Naive thymus-derived CD4-positive, alpha-beta T cell (primary cell): ENCODE measurements at regions of chr17 and their contacts with region 1.

Region 1: GRCh38 chr17:82518826-82519810 is at the start of gene FOXK2:
- DNase-seq: peak; percentile 90 to 99 (median 95)
- ATAC-seq: peak; percentile 99
- H3K4me3 ChIP-seq: peak within 1 kb of the TSS; percentile 67
- H3K4me3 Mint-ChIP-seq: peak within 1 kb of the TSS; percentile 82 to 99 (median 93)
- H3K27ac ChIP-seq: peak within 1 kb of the TSS; percentile 92
- H3K27ac Mint-ChIP-seq: peak within 1 kb of the TSS; percentile 71 to 93 (median 87)
- H3K4me1 ChIP-seq: peaks cover 4 to 16% of the 10 kb centered on the region in 2 donors
- H3K4me1 Mint-ChIP-seq: peaks cover 15 to 36% (median 30%) of the 10 kb centered on the region in 7 donors
- H3K27me3 ChIP-seq: no peaks in the 10 kb centered on the region
- H3K27me3 Mint-ChIP-seq: no peaks in the 10 kb centered on the region
- total RNA-seq, gene FOXK2: 36.5 to 67.1 (median 48.4) TPM

Region 2: DNA sequence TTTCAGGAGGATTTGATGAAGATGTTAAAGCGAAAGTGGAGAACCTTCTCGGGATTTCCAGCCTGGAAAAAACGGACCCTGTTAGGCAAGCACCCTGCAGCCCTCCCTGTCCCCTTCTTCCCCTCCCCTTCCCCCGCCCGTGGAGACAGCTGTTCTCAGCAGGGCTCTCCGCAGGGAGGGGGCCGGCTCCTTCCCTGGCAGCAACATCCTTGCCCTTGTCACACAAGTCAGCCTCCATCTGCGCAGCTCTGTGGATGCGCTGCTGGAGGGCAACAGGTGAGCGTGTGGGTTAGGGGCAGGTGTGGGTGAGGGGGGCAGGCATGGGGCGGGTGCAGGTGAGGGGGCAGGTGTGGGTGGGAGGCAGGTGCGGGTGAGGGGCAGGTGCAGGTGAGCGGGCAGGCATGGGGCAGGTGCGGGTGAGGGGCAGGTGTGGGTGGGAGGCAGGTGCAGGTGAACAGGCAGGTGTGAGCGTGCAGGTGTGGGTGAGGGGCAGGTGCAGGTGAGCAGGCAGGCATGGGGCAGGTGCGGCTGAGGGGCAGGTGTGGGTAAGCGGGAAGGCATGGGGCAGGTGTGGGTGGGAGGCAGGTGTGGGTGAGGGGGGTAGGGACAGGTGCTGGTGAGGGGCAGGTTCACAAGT is 78.0 kb before region 1 on chr17:
- CTCF ChIA-PET with region 1: no interaction called
- POLR2A ChIA-PET with region 1: no interaction called
- intact Hi-C with region 1: no loop called
- DNase-seq: no peak
- ATAC-seq: no peak
- H3K4me3 ChIP-seq: no peak overlapping the region
- H3K4me3 Mint-ChIP-seq: no peak overlapping the region
- H3K27ac ChIP-seq: no peak overlapping the region
- H3K27ac Mint-ChIP-seq: peak overlapping the region in 1 of 9 donors; percentile 28
- H3K4me1 ChIP-seq: no peaks in the 10 kb centered on the region
- H3K4me1 Mint-ChIP-seq: peaks cover 0 to 10% (median 2%) of the 10 kb centered on the region in 7 donors
- H3K27me3 ChIP-seq: no peaks in the 10 kb centered on the region
- H3K27me3 Mint-ChIP-seq: no peaks in the 10 kb centered on the region

Region 3: GRCh38 chr17:82494236-82495055 is 24.7 kb before region 1 on chr17:
- CTCF ChIA-PET with region 1: no interaction called
- POLR2A ChIA-PET with region 1: interaction called, 11 read pairs
- intact Hi-C with region 1: loop called (anchors 1 to 2 kb)
- DNase-seq: peak; percentile 68 to 92 (median 80)
- ATAC-seq: peak; percentile 80
- H3K4me3 ChIP-seq: no peak overlapping the region
- H3K4me3 Mint-ChIP-seq: peak overlapping the region in 9 of 10 donors; percentile 14 to 84 (median 65)
- H3K27ac ChIP-seq: peak overlapping the region; percentile 28
- H3K27ac Mint-ChIP-seq: peak overlapping the region; percentile 77 to 94 (median 87)
- H3K4me1 ChIP-seq: peaks cover 0 to 9% of the 10 kb centered on the region in 2 donors
- H3K4me1 Mint-ChIP-seq: peaks cover 8 to 33% (median 25%) of the 10 kb centered on the region in 7 donors
- H3K27me3 ChIP-seq: no peaks in the 10 kb centered on the region
- H3K27me3 Mint-ChIP-seq: peaks cover 0 to 2% (median 0%) of the 10 kb centered on the region in 5 donors

Region 4: DNA sequence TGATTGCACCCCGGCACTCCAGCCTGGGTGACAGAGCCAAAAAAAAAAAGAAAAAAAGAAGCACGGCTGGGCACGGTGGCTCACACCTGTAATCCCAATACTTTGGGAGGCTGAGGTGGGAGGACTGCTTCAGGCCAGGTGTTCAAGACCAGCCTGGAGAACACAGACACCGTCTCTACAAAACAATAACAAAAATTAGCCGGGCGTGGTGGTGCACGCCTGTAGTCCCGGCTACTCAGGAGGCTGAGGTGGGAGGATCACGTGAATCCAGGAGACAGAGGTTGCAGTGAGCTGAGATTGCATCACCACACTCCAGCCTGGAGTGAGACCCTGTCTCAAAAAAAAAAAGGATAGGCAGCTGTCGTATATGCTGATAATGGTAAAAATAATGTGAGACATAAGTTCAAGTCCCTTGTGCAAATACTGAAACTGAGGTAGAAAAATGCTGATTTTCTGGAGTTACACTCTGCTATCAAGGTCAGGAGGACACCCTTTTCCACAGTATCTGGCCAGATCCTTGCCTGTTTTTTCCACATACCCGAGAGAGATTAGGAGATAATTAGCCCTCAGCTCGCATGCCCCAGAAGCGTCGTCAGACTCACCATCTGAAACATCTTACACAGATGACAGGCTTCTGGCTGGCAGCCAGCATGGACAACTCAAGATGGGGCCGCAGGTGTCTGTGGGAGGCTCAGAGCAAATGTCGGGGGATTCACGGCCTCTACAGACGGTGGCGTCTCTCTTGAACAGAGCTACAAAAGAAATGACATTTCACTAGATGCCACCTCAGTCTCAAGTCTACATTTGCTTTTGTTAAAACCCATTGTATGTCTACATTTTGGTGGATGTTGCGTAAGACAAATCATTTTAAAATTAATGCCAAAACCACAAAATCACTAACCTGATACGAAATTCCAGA is 92.3 kb after region 1 on chr17:
- CTCF ChIA-PET with region 1: no interaction called
- POLR2A ChIA-PET with region 1: no interaction called
- intact Hi-C with region 1: no loop called
- DNase-seq: no peak
- ATAC-seq: no peak
- H3K4me3 ChIP-seq: no peak overlapping the region
- H3K4me3 Mint-ChIP-seq: no peak overlapping the region
- H3K27ac ChIP-seq: no peak overlapping the region
- H3K27ac Mint-ChIP-seq: peak overlapping the region in 1 of 9 donors; percentile 17
- H3K4me1 ChIP-seq: no peaks in the 10 kb centered on the region
- H3K4me1 Mint-ChIP-seq: peaks cover 0 to 7% (median 0%) of the 10 kb centered on the region in 7 donors
- H3K27me3 ChIP-seq: no peaks in the 10 kb centered on the region
- H3K27me3 Mint-ChIP-seq: no peaks in the 10 kb centered on the region